GM10248 (cell line): ENCODE measurements at regions of chr18 and their contacts with region 1.

Region 1: GRCh38 chr18:31648966-31649429 is 35.4 kb downstream of the B4GALT6 start:
- DNase-seq: peak; percentile 59
- CTCF ChIP-seq: no peak

Region 2: GRCh38 chr18:31371989-31372388 is 277.0 kb before region 1 on chr18:
- CTCF ChIA-PET with region 1: no interaction called
- POLR2A ChIA-PET with region 1: no interaction called
- DNase-seq: no peak
- CTCF ChIP-seq: no peak

Region 3: GRCh38 chr18:31538837-31539236 is 110.2 kb before region 1 on chr18:
- CTCF ChIA-PET with region 1: no interaction called
- POLR2A ChIA-PET with region 1: no interaction called
- DNase-seq: no peak
- CTCF ChIP-seq: no peak

Region 4: GRCh38 chr18:31619291-31619690 is 29.7 kb before region 1 on chr18:
- CTCF ChIA-PET with region 1: no interaction called
- POLR2A ChIA-PET with region 1: no interaction called
- DNase-seq: no peak
- CTCF ChIP-seq: no peak

Region 5: DNA sequence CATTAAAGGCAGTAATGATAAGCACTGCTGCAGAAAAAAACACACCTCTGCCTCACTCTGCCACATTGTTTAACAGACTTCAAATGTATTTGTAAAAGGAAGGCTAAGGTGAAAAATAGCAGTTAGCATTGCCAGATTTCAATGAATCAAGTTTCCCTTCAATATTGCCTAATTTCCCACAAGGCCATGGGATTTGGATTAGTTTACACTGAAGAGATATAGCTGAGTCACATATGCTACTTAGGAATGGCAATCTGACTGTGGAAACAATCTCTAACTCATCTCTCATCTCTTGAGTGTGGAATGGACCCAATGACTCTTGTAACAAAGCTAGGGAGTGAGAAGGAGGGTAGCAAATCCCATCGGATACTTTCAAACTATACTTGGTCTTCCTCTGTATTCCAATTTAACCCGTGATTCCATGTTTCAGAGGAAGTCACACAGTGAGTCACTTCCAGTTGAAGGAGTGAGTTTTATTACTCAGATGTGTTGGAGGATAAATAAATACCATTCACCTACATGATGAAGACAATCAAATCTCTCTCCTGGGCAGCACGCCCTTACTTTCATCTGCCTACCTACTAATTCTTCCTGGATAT is 30.2 kb after region 1 on chr18:
- CTCF ChIA-PET with region 1: interaction called, 15 read pairs
- POLR2A ChIA-PET with region 1: no interaction called
- DNase-seq: no peak
- CTCF ChIP-seq: no peak

Region 6: DNA sequence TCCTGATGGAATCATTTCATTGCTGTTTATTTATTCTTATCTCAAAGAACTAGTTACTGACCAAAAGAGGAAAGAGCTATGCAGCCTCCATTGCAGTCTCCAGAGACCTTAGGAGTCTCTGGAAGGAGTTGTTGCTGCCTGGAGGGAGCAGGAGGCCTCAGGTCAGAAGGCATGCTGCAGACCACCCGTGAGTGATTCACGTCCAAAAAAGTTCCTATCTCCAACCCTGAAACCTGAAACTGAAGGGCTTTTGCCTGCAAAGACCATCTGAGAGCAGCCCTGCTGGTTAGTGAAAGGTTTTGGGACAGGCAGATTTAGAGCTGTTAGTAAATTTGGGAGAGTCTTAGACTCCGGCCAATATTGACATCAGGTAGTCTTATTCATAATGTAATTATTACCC is 82.6 kb after region 1 on chr18:
- CTCF ChIA-PET with region 1: no interaction called
- POLR2A ChIA-PET with region 1: no interaction called
- DNase-seq: no peak
- CTCF ChIP-seq: no peak